Astrocyte of the cerebellum (primary cell): ENCODE measurements at regions of chr13 and their contacts with region 1.

Region 1: DNA sequence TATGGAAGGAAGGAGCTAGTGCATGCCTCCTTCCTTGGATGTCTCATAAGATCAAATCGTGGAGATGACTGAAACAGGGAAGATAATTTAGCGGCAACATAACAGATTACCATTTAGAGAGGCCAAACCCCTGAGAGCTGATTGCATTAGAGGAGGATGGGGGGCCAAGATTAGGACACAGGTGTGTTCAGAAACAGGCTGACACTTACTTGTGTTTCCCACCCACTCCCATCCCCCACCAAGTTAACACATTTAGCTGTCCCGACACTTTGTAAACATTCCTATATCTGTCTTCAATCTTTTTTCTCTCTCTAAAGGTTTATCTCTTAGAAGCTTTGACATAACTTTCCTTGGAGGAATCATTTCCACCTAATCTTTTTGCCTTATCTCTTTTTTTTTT is 48.8 kb upstream of the KCTD4 start:
- DNase-seq: no peak
- H3K4me3 ChIP-seq: no peak overlapping the region
- CTCF ChIP-seq: no peak

Region 2: GRCh38 chr13:45178349-45179162 is 71.1 kb before region 1 on chr13:
- in situ Hi-C with region 1: loop called (anchors 5 kb)
- DNase-seq: peak; percentile 46
- H3K4me3 ChIP-seq: no peak overlapping the region
- CTCF ChIP-seq: no peak